ENCODE measurements at regions of chr13 and their contacts with region 1.

Region 1: GRCh38 chr13:50244713-50245574 is 229.7 kb downstream of the KCNRG start:
- DNase-seq: peak; percentile 99
- ATAC-seq: peak; percentile 95
- H3K4me3 ChIP-seq: peak overlapping the region in 2 of 3 experiments; percentile 17 to 42; a peak in 1 of 6 replicates
- H3K27ac ChIP-seq: peak overlapping the region; percentile 98
- H3K4me1 ChIP-seq: peaks cover 90% of the 10 kb centered on the region
- H3K27me3 ChIP-seq: no peaks in the 10 kb centered on the region
- CTCF ChIP-seq: 0 out of 2 replicates have a peak, but pooled peaks have one; percentile 22
- EP300 ChIP-seq: peak; percentile 72 to 95; a peak in 3 of 4 replicates
- POLR2A ChIP-seq: peak in 1 of 2 experiments; percentile 58; a peak in 1 of 4 replicates
- RAD21 ChIP-seq: peak; percentile 52; the same call in 1 of the 2 replicates

Region 2: GRCh38 chr13:50189450-50189849 is 55.5 kb before region 1 on chr13:
- CTCF ChIA-PET with region 1: no interaction called
- POLR2A ChIA-PET with region 1: interaction called, 12 read pairs
- in situ Hi-C with region 1: no loop called
- intact Hi-C with region 1: loop called (anchors 5 kb)
- DNase-seq: no peak
- ATAC-seq: no peak
- H3K4me3 ChIP-seq: no peak overlapping the region
- H3K27ac ChIP-seq: peak overlapping the region; percentile 0
- H3K4me1 ChIP-seq: peaks cover 58% of the 10 kb centered on the region
- H3K27me3 ChIP-seq: no peaks in the 10 kb centered on the region; a peak in 1 of 5 replicates
- CTCF ChIP-seq: no peak; the same call in 1 of the 2 replicates
- EP300 ChIP-seq: no peak
- POLR2A ChIP-seq: no peak
- RAD21 ChIP-seq: no peak

Measured in HepG2 (cell line).